ENCODE measurements at regions of chr13 and their contacts with region 1.

Region 1: GRCh38 chr13:99386911-99387788 is 80.0 kb upstream of the GPR183 start:
- DNase-seq: peak; percentile 96
- H3K4me3 Mint-ChIP-seq: no peak overlapping the region
- H3K27ac Mint-ChIP-seq: peak overlapping the region; percentile 85
- H3K4me1 Mint-ChIP-seq: peaks cover 72% of the 10 kb centered on the region
- H3K27me3 Mint-ChIP-seq: no peaks in the 10 kb centered on the region

Region 2: DNA sequence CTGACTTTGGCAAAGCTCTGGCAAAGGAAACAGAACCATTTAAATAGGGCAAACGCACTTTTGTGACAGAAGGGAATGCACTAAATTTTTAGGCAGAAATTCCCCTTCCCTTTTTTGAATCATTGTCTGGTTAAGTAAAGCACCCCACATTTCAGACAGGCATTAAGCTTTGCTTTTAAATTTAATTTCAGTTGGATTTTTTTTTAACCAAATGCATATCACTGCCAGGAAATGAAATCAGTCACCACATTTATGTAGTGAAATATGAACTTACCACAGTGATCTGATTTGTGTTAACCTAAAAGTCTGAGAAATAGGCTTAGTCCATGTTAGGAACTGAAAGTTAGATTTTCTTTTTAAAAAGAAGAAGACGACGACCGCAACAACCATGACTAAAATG is 90.8 kb before region 1 on chr13:
- CTCF ChIA-PET with region 1: interaction called, 10 read pairs
- intact Hi-C with region 1: no loop called
- DNase-seq: no peak
- H3K4me3 Mint-ChIP-seq: peak overlapping the region; percentile 48
- H3K27ac Mint-ChIP-seq: peak overlapping the region; percentile 87
- H3K4me1 Mint-ChIP-seq: peaks cover 75% of the 10 kb centered on the region
- H3K27me3 Mint-ChIP-seq: no peaks in the 10 kb centered on the region

Region 3: DNA sequence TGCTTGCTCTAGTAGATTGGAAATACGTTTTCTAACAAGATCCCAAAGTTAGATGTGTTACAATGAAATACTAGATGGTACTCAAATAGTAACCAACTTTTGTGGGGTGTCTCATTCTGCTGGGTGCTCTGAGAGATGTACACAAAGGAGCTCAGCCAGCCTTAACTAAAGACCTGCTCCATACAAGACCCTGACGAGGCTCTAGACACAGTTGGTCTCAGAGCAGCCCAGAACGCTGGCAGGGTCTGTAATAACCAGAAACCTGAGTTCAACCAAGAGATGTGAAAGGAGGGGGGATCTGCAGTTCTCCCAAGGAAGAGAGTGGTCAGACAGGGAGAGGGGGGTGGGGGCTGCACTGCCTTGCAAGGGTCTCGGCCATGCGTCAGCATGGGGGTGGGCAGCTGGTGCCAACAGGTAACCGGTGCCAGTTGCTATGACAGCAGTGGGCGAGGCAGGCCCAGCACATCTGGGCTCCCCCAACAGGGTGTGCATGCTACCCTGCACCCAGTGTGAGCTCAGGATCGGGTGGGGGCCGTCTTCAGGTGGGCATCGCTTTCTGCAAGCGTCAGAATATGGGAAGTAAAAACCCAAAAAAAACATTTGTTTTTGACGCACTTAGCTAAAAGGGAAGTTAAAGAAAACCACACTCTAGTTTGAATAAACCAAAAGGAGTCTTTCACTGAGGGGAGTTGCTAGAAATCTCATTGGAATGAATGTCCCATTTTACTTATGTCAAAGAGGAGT is 12.0 kb before region 1 on chr13:
- CTCF ChIA-PET with region 1: interaction called, 28 read pairs
- intact Hi-C with region 1: no loop called
- DNase-seq: no peak
- H3K4me3 Mint-ChIP-seq: no peak overlapping the region
- H3K27ac Mint-ChIP-seq: no peak overlapping the region
- H3K4me1 Mint-ChIP-seq: peaks cover 80% of the 10 kb centered on the region
- H3K27me3 Mint-ChIP-seq: no peaks in the 10 kb centered on the region

Region 4: DNA sequence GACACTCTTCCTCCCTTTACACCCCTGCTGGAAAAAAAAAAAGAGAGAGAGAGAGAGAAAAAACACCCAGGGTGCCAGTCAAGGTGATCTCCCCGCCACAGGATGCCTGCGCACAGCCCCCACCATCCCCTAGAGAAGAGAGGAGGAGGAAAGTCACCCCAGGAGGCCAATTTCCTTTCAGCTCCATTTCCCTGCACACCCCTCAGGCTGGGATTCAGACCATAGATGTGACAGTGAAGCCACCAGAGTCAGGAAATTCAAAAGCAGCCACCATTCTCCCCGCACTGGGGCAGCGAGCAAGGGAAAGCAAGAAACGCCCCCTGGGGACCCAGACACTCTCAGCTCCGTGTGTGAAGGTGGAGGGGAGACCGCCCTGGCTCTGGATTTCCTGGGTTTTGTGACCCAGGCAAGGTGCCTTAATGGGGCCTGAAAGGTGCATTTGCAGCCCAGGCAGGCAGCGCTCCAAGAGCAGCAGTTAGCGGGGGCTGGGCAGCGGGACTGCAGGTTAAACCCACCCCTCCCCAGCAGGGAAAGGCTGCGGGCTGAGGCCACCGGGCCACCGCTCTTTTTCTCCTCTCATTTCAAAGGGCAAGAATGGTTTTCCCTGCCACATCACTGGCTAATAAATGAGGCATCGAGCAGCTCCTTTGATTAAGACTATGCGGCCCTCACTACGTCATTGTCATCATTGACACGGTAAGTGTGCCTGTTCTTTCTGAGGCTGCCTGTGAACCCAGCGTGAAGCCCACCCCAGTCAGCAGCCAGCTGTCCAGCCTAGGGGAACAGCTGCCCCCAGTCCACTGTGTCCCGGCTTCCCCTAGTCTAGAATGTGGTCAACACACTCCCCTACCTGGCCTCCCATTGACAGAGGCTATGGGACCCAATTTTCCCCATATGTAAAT is 30.3 kb after region 1 on chr13:
- CTCF ChIA-PET with region 1: interaction called, 76 read pairs
- intact Hi-C with region 1: loop called (anchors 1 kb)
- DNase-seq: peak; percentile 71
- H3K4me3 Mint-ChIP-seq: no peak overlapping the region
- H3K27ac Mint-ChIP-seq: no peak overlapping the region
- H3K4me1 Mint-ChIP-seq: peaks cover 64% of the 10 kb centered on the region
- H3K27me3 Mint-ChIP-seq: peaks cover 2% of the 10 kb centered on the region

Region 5: DNA sequence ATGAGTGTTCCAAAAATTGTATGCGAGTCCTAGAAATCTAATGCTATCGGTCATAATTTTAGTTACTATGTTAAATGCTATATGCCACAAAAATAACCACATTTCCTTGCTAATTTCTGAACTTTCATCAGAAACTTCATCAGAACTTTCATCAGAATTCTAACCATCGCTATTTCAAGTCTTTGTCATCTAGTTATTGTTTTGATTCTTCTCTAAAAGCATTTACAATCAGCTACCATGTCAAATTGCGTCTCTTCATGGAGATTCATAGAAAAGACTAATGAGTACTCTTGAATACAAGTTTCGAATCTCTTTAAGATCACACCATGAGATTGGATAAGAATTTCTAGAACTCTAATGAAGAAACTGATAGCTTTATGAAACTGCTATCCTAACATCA is 61.4 kb after region 1 on chr13:
- CTCF ChIA-PET with region 1: no interaction called
- intact Hi-C with region 1: no loop called
- DNase-seq: no peak
- H3K4me3 Mint-ChIP-seq: no peak overlapping the region
- H3K27ac Mint-ChIP-seq: no peak overlapping the region
- H3K4me1 Mint-ChIP-seq: no peaks in the 10 kb centered on the region
- H3K27me3 Mint-ChIP-seq: peaks cover 4% of the 10 kb centered on the region

Region 6: DNA sequence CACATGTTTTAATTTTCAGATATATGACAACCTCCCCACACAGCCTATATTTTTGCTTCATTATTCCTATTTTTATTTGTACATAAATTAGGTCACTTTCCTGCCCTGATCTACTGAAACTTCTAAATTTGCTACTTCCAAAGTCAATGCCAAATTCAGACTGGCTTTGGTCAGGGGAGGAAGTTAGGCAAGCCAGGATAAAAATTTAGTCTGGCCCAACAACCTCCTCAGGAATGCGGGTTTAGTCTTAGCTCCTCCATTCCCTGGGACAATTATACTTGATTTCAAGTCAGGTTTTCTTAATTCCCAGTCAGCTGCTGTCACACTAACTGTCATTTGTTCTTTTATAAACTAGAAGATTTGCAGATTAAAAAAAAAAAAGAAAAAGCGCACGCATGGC is 198.5 kb after region 1 on chr13:
- CTCF ChIA-PET with region 1: no interaction called
- intact Hi-C with region 1: no loop called
- DNase-seq: no peak
- H3K4me3 Mint-ChIP-seq: no peak overlapping the region
- H3K27ac Mint-ChIP-seq: no peak overlapping the region
- H3K4me1 Mint-ChIP-seq: peaks cover 3% of the 10 kb centered on the region
- H3K27me3 Mint-ChIP-seq: no peaks in the 10 kb centered on the region